Dorsolateral prefrontal cortex (tissue), 120 donors: ENCODE measurements at regions of chr10 and their contacts with region 1.

Region 1: GRCh38 chr10:7813481-7813880 is 4.8 kb upstream of the TAF3 start:
- DNase-seq: no peak
- H3K4me3 ChIP-seq: no peak overlapping the region
- H3K27ac ChIP-seq: no peak overlapping the region
- H3K27me3 ChIP-seq: no peaks in the 10 kb centered on the region
- CTCF ChIP-seq: no peak

Region 2: GRCh38 chr10:7744307-7744706 is 69.2 kb before region 1 on chr10:
- intact Hi-C with region 1: no loop called
- DNase-seq: no peak
- H3K4me3 ChIP-seq: no peak overlapping the region
- H3K27ac ChIP-seq: no peak overlapping the region
- H3K27me3 ChIP-seq: no peaks in the 10 kb centered on the region
- CTCF ChIP-seq: no peak

Region 3: DNA sequence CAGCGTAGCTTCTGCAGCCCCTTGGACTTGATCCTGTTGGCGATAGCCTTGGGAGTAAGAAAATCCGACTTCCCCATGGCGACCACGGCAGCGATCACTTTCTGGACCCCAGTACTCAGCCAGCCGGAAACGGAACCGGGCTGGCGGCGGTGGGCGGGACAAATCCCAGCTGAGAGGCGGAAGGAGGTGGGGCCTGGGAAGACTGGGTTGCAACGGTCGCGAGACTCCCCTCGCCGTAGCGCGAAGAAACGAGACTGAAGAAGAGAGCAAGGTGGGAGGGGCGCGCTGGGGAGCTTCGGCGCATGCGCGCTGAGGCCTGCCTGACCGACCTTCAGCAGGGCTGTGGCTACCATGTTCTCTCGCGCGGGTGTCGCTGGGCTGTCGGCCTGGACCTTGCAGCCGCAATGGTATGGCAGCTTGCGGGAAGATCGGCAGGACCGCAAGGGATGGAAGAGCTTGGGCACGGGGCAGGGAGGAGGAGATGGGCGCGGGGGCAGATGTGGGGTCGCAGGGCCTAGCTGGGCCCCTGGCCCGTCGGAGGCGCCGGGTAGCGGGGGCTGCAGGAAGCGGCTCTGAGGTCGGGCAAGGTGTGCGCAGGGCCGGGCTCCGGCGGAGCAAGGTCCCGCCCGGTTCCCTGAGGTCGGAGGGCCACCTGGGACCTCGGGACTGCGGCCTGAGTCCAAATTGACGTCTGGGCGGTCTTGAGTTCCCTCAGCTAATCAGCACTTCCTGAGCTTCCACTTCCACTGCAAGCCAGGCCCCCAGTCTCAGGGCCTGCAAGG is 25.4 kb before region 1 on chr10 and contains the starts of genes ATP5F1C and KIN:
- intact Hi-C with region 1: loop called (anchors 2 kb)
- DNase-seq: peak; percentile 96 to 98 (median 97)
- H3K4me3 ChIP-seq: peak within 1 kb of the TSS; percentile 67 to 100 (median 96)
- H3K27ac ChIP-seq: peak within 1 kb of the TSS; percentile 12 to 92 (median 83)
- H3K27me3 ChIP-seq: no peaks in the 10 kb centered on the region
- CTCF ChIP-seq: peak in 23 of 56 donors; percentile 4 to 53 (median 23)
- total RNA-seq, gene ATP5F1C: 109 to 282 (median 209) TPM
- total RNA-seq, gene KIN: 6.3 to 21.7 (median 12.2) TPM